ENCODE measurements at regions of chr2 and their contacts with region 1.

Region 1: GRCh38 chr2:56077352-56077915 is 106.4 kb upstream of the CCDC85A start:
- DNase-seq: peak; percentile 39
- ATAC-seq: peak; percentile 74
- H3K4me3 ChIP-seq: no peak overlapping the region
- H3K27ac ChIP-seq: no peak overlapping the region
- H3K4me1 ChIP-seq: no peaks in the 10 kb centered on the region
- H3K27me3 ChIP-seq: 0 out of 2 replicates have a peak, but pooled peaks cover 4% of the 10 kb centered on the region
- CTCF ChIP-seq: peak; percentile 40 to 76 (median 75); a peak in 5 of 6 replicates
- POLR2A ChIP-seq: no peak
- RAD21 ChIP-seq: peak; percentile 50

Region 2: DNA sequence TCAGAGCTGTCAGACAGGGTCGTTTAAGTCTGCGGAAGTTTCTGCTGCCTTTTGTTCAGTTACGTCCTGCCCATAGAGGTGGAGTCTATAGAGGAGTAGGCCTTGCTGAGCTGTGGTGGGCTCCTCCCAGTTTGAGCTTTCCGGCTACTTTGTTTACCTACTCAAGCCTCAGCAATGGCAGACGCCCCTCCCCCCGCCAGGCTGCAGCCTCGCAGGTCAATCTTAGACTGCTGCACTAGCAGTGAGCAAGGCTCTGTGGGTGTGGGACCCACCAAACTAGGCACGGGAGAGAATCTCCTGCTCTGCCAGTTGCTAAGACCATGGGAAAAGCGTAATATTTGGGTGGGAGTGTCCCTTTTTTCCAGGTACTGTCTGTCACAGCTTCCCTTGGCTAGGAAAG is 240.4 kb before region 1 on chr2:
- CTCF ChIA-PET with region 1: no interaction called
- POLR2A ChIA-PET with region 1: no interaction called
- RAD21 ChIA-PET with region 1: no interaction called
- intact Hi-C with region 1: no loop called
- DNase-seq: no peak
- ATAC-seq: no peak
- H3K4me3 ChIP-seq: no peak overlapping the region
- H3K27ac ChIP-seq: no peak overlapping the region
- H3K4me1 ChIP-seq: peaks cover 0 to 5% of the 10 kb centered on the region in 2 experiments; a peak in 1 of 4 replicates
- H3K27me3 ChIP-seq: no peaks in the 10 kb centered on the region
- CTCF ChIP-seq: no peak
- POLR2A ChIP-seq: no peak
- RAD21 ChIP-seq: no peak

Region 3: DNA sequence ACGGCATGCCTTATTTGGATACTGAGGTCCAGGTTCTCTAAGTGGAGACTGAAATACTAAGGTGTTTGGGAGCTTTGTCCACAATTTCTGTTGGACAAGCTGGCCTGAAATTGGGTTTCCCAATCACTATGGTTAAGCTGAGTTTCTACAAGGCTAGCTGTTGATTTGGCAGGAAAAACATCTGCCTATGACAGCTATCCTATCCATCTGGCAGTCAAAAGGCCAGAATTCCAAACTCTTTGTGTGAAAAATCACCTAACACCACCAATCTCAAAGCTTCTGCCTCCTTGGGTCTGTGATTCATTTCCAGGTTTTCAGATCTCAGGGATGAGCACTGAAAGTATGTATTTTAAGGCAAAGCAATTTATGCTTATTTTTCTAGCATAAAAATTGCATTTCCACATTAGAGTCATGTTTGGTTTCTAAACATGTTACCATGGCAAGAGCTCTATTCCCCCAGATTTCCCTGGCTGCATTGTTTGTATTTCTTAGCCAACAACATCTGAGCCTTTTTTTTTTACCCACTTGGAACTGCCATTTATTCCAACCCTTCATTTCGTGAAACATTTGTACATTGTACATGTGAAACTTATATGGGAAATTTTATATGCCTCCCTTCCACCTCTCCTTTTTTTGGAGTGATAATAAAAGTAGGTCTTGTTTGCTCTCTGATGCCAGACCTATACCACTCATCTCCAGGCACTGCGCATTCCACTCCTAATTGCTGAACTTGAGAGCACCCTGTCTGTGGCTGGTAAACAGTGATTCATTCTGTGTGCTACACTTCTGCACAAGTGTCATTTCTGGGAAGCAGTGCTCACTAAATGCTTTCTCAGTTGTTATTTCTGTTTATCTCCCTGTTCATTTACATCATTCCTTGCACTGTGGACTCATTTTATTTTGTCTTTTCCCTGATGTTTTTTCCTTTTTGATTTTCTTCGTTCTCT is 90.5 kb after region 1 on chr2:
- CTCF ChIA-PET with region 1: no interaction called
- POLR2A ChIA-PET with region 1: no interaction called
- RAD21 ChIA-PET with region 1: no interaction called
- intact Hi-C with region 1: no loop called
- DNase-seq: no peak
- ATAC-seq: no peak
- H3K4me3 ChIP-seq: no peak overlapping the region
- H3K27ac ChIP-seq: no peak overlapping the region
- H3K4me1 ChIP-seq: no peaks in the 10 kb centered on the region
- H3K27me3 ChIP-seq: no peaks in the 10 kb centered on the region
- CTCF ChIP-seq: no peak
- POLR2A ChIP-seq: no peak
- RAD21 ChIP-seq: no peak

Region 4: GRCh38 chr2:57516698-57517340 is 1439.4 kb after region 1 on chr2:
- CTCF ChIA-PET with region 1: interaction called, 6 read pairs
- POLR2A ChIA-PET with region 1: no interaction called
- RAD21 ChIA-PET with region 1: no interaction called
- intact Hi-C with region 1: loop called (anchors 5 kb)
- DNase-seq: peak; percentile 41
- ATAC-seq: peak; percentile 78
- H3K4me3 ChIP-seq: no peak overlapping the region; a peak in 1 of 4 replicates
- H3K27ac ChIP-seq: no peak overlapping the region
- H3K4me1 ChIP-seq: no peaks in the 10 kb centered on the region
- H3K27me3 ChIP-seq: no peaks in the 10 kb centered on the region
- CTCF ChIP-seq: peak in 2 of 3 experiments; percentile 43 to 70; a peak in 3 of 6 replicates
- POLR2A ChIP-seq: no peak
- RAD21 ChIP-seq: peak; percentile 80

Measured in HCT116 (cell line).